ENCODE measurements at regions of chr5 and their contacts with region 1.

Region 1: GRCh38 chr5:36657563-36657995 is 51.2 kb downstream of the SLC1A3 start:
- DNase-seq: peak; percentile 100
- H3K4me3 Mint-ChIP-seq: peak overlapping the region; percentile 51
- H3K27ac Mint-ChIP-seq: peak overlapping the region; percentile 95
- H3K4me1 Mint-ChIP-seq: peaks cover 20% of the 10 kb centered on the region
- H3K27me3 Mint-ChIP-seq: no peaks in the 10 kb centered on the region
- CTCF ChIP-seq: no peak

Region 2: DNA sequence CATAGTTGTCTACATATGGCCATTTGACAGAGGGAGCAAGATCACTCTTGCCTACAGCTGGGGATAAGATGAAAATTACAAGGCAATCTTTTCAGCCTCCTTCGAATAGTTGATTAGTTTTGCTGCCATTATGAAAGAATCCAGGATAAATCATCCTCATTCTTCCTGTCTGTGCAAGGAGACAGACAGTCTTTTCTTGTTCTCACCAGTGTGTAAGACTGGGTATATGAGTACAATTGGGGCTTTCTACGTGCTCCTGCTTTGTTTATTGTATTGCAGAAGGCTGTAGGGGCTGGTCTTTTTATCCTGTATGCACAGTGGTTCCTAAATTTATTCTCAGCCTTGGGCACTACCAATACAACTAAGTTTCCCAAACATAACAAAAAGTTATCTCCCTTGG is 963.1 kb before region 1 on chr5:
- CTCF ChIA-PET with region 1: no interaction called
- POLR2A ChIA-PET with region 1: no interaction called
- intact Hi-C with region 1: no loop called
- DNase-seq: no peak
- H3K4me3 Mint-ChIP-seq: no peak overlapping the region
- H3K27ac Mint-ChIP-seq: no peak overlapping the region
- H3K4me1 Mint-ChIP-seq: peaks cover 6% of the 10 kb centered on the region
- H3K27me3 Mint-ChIP-seq: no peaks in the 10 kb centered on the region
- CTCF ChIP-seq: no peak

Region 3: DNA sequence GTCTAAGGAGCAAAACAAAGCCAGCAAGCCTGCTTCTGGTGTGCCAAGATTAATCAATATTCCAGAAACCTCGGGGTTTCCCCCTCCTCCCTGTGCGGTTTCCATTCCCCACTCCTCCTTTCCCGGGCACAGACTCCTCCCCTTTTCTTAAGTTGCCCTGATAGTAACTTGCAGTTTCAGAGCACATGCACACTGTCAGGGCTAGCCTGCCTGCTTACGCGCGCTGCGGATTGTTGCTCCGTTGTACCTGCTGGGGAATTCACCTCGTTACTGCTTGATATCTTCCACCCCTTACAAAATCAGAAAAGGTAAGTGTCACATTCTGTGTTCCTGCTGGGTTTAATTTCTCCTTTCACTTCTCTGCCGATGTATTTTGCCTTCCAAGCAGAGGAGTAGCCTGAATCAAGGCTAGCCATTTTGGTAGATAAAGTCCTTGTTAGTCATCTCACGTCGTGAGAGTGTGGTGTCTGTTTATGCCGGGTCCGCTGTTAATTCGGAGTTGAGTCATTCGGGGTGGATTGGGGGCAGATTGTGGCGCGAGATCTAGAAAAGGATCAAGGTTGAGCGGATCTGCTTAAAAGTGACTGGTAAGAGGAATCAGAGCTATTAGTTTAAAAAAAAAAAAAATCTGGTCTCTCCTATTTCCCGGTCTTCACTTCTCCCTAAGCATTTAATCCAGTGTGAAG is 51.0 kb before region 1 on chr5 and contains the start of gene SLC1A3:
- CTCF ChIA-PET with region 1: interaction called, 4 read pairs
- POLR2A ChIA-PET with region 1: interaction called, 54 read pairs
- intact Hi-C with region 1: loop called (anchors 5 kb)
- DNase-seq: peak; percentile 84
- H3K4me3 Mint-ChIP-seq: peak within 1 kb of the TSS; percentile 88
- H3K27ac Mint-ChIP-seq: peak within 1 kb of the TSS; percentile 84
- H3K4me1 Mint-ChIP-seq: peaks cover 9% of the 10 kb centered on the region
- H3K27me3 Mint-ChIP-seq: no peaks in the 10 kb centered on the region
- CTCF ChIP-seq: no peak
- total RNA-seq, gene SLC1A3: 5.9 and 9.6 TPM in 2 replicates

Region 4: GRCh38 chr5:36611520-36612274 is 45.9 kb before region 1 on chr5:
- CTCF ChIA-PET with region 1: interaction called, 4 read pairs
- POLR2A ChIA-PET with region 1: interaction called, 54 read pairs
- intact Hi-C with region 1: loop called (anchors 5 kb)
- DNase-seq: no peak
- H3K4me3 Mint-ChIP-seq: no peak overlapping the region
- H3K27ac Mint-ChIP-seq: no peak overlapping the region
- H3K4me1 Mint-ChIP-seq: peaks cover 9% of the 10 kb centered on the region
- H3K27me3 Mint-ChIP-seq: no peaks in the 10 kb centered on the region
- CTCF ChIP-seq: no peak

Region 5: GRCh38 chr5:37436146-37436934 is 778.8 kb after region 1 on chr5:
- CTCF ChIA-PET with region 1: no interaction called
- POLR2A ChIA-PET with region 1: no interaction called
- intact Hi-C with region 1: no loop called
- DNase-seq: no peak
- H3K4me3 Mint-ChIP-seq: no peak overlapping the region
- H3K27ac Mint-ChIP-seq: no peak overlapping the region
- H3K4me1 Mint-ChIP-seq: no peaks in the 10 kb centered on the region
- H3K27me3 Mint-ChIP-seq: no peaks in the 10 kb centered on the region
- CTCF ChIP-seq: no peak

Measured in MCF 10A (cell line).